HepG2 (cell line): ENCODE measurements at regions of chr10 and their contacts with region 1.

Region 1: GRCh38 chr10:29239569-29240472 is 49.0 kb upstream of the LYZL1 start:
- DNase-seq: peak; percentile 57
- ATAC-seq: peak; percentile 98
- H3K4me3 ChIP-seq: no peak overlapping the region
- H3K27ac ChIP-seq: no peak overlapping the region
- H3K4me1 ChIP-seq: peaks cover 14% of the 10 kb centered on the region
- H3K27me3 ChIP-seq: no peaks in the 10 kb centered on the region
- CTCF ChIP-seq: peak; percentile 90
- EP300 ChIP-seq: no peak
- POLR2A ChIP-seq: no peak
- RAD21 ChIP-seq: peak; percentile 76; the same call in 1 of the 2 replicates

Region 2: GRCh38 chr10:29257106-29257783 is 17.4 kb after region 1 on chr10:
- CTCF ChIA-PET with region 1: no interaction called
- POLR2A ChIA-PET with region 1: no interaction called
- in situ Hi-C with region 1: no loop called
- intact Hi-C with region 1: no loop called
- DNase-seq: no peak
- ATAC-seq: peak; percentile 38; the same call in 2 of the 3 replicates
- H3K4me3 ChIP-seq: no peak overlapping the region; a peak in 1 of 6 replicates
- H3K27ac ChIP-seq: no peak overlapping the region
- H3K4me1 ChIP-seq: peaks cover 28% of the 10 kb centered on the region
- H3K27me3 ChIP-seq: 0 out of 5 replicates have a peak, but pooled peaks cover 0 to 7% of the 10 kb centered on the region in 2 experiments
- CTCF ChIP-seq: no peak
- EP300 ChIP-seq: no peak
- POLR2A ChIP-seq: no peak
- RAD21 ChIP-seq: no peak

Region 3: DNA sequence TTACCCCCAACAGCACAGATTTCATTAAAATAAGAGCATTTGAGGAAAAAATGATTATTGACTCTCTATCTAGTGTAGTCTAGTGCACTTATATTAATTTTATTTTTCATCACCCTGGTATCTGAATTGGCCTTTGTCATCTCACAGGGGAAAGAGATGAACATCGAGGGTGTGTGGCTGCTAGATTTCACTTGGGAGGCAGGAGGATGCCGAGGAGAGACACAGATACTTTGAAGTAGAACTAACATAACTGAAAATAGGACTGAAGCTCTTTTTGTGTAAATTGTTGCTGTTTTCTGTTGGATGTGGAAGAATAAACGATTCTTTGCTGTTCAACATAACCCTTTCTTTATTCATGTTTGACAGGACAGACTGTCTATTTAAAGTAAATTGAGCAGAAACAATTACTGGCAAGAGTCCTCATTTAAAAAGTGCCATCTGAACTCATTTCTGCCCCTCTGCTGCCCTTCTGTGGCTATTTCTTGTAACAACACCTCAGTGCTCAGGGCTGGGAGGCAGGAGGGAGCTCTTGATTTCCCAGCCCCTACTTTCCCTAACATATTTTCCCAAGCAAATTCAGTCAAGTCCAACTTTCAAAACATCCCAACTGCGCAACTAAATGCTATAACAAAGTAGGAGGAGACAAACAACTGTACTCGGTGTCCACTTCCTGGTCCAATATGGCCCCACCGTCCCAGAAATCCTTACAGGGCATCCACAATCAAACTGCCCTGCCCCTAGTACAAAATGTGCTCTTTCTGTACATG is 64.6 kb after region 1 on chr10:
- CTCF ChIA-PET with region 1: interaction called, 5 read pairs
- POLR2A ChIA-PET with region 1: no interaction called
- in situ Hi-C with region 1: no loop called
- intact Hi-C with region 1: loop called (anchors 1 kb)
- DNase-seq: peak; percentile 68
- ATAC-seq: peak; percentile 82
- H3K4me3 ChIP-seq: peak overlapping the region in 2 of 3 experiments; percentile 27 to 46; a peak in 3 of 6 replicates
- H3K27ac ChIP-seq: no peak overlapping the region
- H3K4me1 ChIP-seq: peaks cover 10% of the 10 kb centered on the region; the same call in 1 of the 2 replicates
- H3K27me3 ChIP-seq: no peaks in the 10 kb centered on the region
- CTCF ChIP-seq: peak; percentile 86
- EP300 ChIP-seq: no peak
- POLR2A ChIP-seq: no peak
- RAD21 ChIP-seq: peak; percentile 84

Region 4: DNA sequence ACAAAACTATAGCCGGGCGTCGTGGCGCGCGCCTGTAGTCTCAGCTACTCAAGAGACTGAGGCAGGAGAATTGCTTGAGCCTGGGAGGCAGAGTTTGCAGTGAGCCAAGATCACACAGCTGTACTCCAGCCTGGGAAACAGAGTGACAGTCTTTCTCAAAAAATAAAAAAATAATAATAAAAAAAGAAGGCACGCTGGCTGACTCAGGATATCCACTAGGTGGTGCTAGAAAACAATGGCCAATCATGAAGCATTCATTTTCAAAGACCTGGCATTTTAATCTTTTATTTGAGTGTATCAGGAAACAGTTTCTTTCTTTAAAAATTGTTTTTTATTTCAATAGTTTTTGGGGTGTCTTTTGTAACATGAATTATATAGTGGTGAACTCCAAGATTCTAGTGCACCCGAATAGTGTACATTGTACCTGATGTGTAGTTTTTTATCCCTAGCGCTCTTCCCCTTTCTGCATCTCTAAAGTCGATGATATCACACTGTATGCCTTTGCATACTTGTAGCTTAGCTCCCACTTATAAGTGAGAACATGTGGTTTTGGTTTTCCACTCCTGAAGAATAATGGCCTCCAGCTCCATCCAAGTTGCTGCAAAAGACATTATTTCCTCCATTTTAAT is 137.6 kb after region 1 on chr10:
- CTCF ChIA-PET with region 1: no interaction called
- POLR2A ChIA-PET with region 1: no interaction called
- in situ Hi-C with region 1: loop called (anchors 10 kb)
- intact Hi-C with region 1: no loop called
- DNase-seq: no peak
- ATAC-seq: no peak
- H3K4me3 ChIP-seq: no peak overlapping the region
- H3K27ac ChIP-seq: no peak overlapping the region
- H3K4me1 ChIP-seq: peaks cover 36% of the 10 kb centered on the region
- H3K27me3 ChIP-seq: peaks cover 0 to 6% of the 10 kb centered on the region in 2 experiments; a peak in 2 of 5 replicates
- CTCF ChIP-seq: peak; percentile 40; the same call in 1 of the 2 replicates
- EP300 ChIP-seq: no peak
- POLR2A ChIP-seq: no peak
- RAD21 ChIP-seq: no peak

Region 5: GRCh38 chr10:29392376-29393021 is 152.7 kb after region 1 on chr10:
- CTCF ChIA-PET with region 1: interaction called, 6 read pairs
- POLR2A ChIA-PET with region 1: no interaction called
- in situ Hi-C with region 1: no loop called
- intact Hi-C with region 1: loop called (anchors 2 kb)
- DNase-seq: peak; percentile 54
- ATAC-seq: peak; percentile 73
- H3K4me3 ChIP-seq: no peak overlapping the region
- H3K27ac ChIP-seq: no peak overlapping the region
- H3K4me1 ChIP-seq: peaks cover 36% of the 10 kb centered on the region
- H3K27me3 ChIP-seq: 0 out of 5 replicates have a peak, but pooled peaks cover 0 to 1% of the 10 kb centered on the region in 2 experiments
- CTCF ChIP-seq: peak; percentile 75
- EP300 ChIP-seq: no peak
- POLR2A ChIP-seq: no peak
- RAD21 ChIP-seq: 0 out of 2 replicates have a peak, but pooled peaks have one; percentile 17

Region 6: DNA sequence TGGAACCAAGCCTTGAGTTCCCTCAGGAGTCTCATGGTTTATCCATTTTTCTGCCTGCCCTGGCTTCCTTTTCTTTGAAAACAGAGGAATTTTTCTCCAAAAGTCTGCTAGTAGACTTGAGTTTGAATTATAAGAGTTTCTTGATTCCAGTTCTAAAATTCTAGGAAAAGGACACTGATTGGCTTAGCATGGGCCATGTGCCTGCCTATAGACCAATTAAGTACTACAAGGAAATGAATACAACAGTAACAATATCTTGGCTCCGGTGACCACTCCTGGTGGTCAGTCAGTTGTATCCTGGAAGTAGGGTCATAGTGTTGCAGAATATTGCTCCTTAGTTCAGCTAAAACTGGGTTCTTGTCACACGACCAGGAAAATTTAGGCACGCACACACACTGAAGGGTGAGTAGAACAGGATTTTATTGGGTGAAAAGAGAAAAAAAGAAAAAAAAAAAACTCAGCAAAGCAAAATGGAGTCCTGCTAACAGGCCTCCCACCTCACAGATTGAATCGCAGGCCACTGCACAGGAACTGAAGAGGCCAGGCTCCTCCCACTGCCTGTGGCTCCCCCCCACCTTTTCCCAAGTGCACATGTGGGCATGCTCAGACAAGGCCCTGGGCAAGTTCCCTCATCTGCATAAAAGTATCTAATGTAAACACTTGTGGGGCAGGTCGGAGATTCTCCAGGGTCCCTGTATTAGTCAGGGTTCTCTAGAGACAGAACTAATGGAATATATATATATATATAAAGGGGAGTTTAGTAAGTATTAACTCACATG is 204.1 kb after region 1 on chr10:
- CTCF ChIA-PET with region 1: no interaction called
- POLR2A ChIA-PET with region 1: no interaction called
- in situ Hi-C with region 1: no loop called
- intact Hi-C with region 1: loop called (anchors 2 kb)
- DNase-seq: peak; percentile 50
- ATAC-seq: peak; percentile 77
- H3K4me3 ChIP-seq: no peak overlapping the region
- H3K27ac ChIP-seq: peak overlapping the region; percentile 58
- H3K4me1 ChIP-seq: peaks cover 31% of the 10 kb centered on the region
- H3K27me3 ChIP-seq: no peaks in the 10 kb centered on the region
- CTCF ChIP-seq: no peak
- EP300 ChIP-seq: no peak
- POLR2A ChIP-seq: no peak
- RAD21 ChIP-seq: no peak